ENCODE measurements at regions of chr4 and their contacts with region 1.

Region 1: GRCh38 chr4:76179398-76180318 is 31.5 kb upstream of the NUP54 start:
- DNase-seq: peak; percentile 91
- H3K4me3 ChIP-seq: no peak overlapping the region
- H3K27ac ChIP-seq: no peak overlapping the region
- H3K4me1 ChIP-seq: no peaks in the 10 kb centered on the region
- H3K27me3 ChIP-seq: no peaks in the 10 kb centered on the region
- CTCF ChIP-seq: peak; percentile 90

Region 2: DNA sequence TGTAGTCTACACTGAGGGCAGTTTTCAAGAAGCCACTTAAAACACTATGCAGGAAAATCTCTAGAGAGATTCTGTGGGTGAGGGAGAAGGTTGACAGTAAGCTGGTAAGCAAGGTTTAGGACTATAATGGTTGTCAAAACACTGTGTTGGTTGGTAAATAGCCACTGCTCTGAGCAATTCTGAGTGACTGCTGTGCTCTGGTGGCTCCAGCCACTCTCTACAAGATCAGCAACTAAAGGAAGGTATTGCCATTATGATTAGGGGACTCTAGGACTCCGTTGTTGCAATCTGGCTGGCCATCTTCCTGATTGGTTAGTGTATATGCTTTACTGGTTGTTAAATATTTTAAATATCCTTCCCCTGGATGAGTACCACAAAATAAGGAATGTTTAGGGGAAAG is 66.4 kb after region 1 on chr4:
- intact Hi-C with region 1: loop called (anchors 10 kb)
- DNase-seq: no peak
- H3K4me3 ChIP-seq: no peak overlapping the region
- H3K27ac ChIP-seq: no peak overlapping the region
- H3K4me1 ChIP-seq: no peaks in the 10 kb centered on the region
- H3K27me3 ChIP-seq: no peaks in the 10 kb centered on the region
- CTCF ChIP-seq: no peak

Region 3: GRCh38 chr4:76504613-76505465 is 325.2 kb after region 1 on chr4:
- intact Hi-C with region 1: loop called (anchors 10 kb)
- DNase-seq: no peak
- H3K4me3 ChIP-seq: no peak overlapping the region
- H3K27ac ChIP-seq: no peak overlapping the region
- H3K4me1 ChIP-seq: no peaks in the 10 kb centered on the region
- H3K27me3 ChIP-seq: no peaks in the 10 kb centered on the region
- CTCF ChIP-seq: peak; percentile 57